K562 (cell line): ENCODE measurements at regions of chr2 and their contacts with region 1.

Region 1: DNA sequence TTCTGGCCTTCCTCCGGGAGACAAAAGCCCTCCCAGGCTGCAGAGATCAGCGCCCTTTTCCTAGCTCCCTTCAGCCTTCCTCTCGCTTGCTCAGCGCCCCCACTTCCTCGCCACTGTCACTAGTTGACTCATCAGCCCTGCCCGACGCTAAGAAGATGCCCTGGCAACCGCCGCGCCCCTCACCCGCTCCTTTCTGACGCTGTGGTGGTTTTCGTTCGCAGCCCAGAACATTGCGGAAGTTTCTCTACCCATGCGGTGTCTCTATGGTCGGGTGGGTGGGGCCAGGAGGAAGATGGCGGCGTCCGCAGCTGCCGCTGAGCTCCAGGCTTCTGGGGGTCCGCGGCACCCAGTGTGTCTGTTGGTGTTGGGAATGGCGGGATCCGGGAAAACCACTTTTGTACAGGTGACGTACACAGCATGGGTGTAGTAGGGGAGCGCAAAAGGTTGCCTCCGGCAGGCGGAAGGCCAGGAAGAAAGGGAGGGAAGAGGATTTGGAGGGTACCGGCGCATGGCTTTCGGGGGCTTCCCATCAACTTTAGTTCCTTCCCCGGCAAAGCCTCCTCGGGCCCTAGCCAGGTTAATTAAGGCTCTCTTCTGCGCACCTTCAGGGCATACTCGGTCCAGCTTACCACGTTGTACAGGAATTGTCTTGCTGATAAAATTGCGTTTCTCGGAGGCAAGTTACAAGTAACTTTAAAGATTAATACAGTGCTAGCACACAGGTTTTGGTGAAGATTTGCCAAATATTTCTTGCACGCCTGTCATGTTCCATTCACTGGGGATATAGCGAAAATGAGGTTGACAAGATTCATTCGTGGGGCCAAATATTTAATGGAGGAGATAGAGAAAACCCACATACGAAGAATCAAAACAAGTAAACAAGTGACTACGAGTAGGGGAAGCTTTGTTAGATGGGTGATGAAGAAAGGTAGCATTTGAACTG is at the starts of genes CCDC121 and GPN1:
- DNase-seq: peak; percentile 84 to 87 (median 86)
- ATAC-seq: peak; percentile 98
- H3K4me3 ChIP-seq: peak within 1 kb of the TSS; percentile 93
- H3K27ac ChIP-seq: peak within 1 kb of the TSS; percentile 82
- H3K4me1 ChIP-seq: peaks cover 0 to 11% of the 10 kb centered on the region in 2 experiments; a peak in 4 of 5 replicates
- H3K27me3 ChIP-seq: no peaks in the 10 kb centered on the region
- CTCF ChIP-seq: no peak
- EP300 ChIP-seq: no peak
- POLR2A ChIP-seq: peak; percentile 96
- RAD21 ChIP-seq: peak in 1 of 2 experiments; percentile 9; a peak in 1 of 4 replicates
- polyA plus RNA-seq, gene CCDC121: 2.2 to 4.2 TPM
- polyA plus RNA-seq, gene GPN1: 131 to 171 TPM

Region 2: GRCh38 chr2:27409321-27410073 is 219.5 kb before region 1 on chr2 and contains the start of gene PPM1G:
- CTCF ChIA-PET with region 1: no interaction called
- POLR2A ChIA-PET with region 1: interaction called, 3 read pairs
- in situ Hi-C with region 1: no loop called
- intact Hi-C with region 1: loop called (anchors 1 kb)
- DNase-seq: peak; percentile 93 to 97 (median 94)
- ATAC-seq: peak; percentile 98
- H3K4me3 ChIP-seq: peak within 1 kb of the TSS; percentile 99
- H3K27ac ChIP-seq: peak within 1 kb of the TSS; percentile 93
- H3K4me1 ChIP-seq: peaks cover 6 to 26% of the 10 kb centered on the region in 2 experiments; a peak in 4 of 5 replicates
- H3K27me3 ChIP-seq: no peaks in the 10 kb centered on the region
- CTCF ChIP-seq: 0 out of 6 replicates have a peak, but pooled peaks of 1 of the 3 experiments have one; percentile 7
- EP300 ChIP-seq: peak; percentile 40
- POLR2A ChIP-seq: peak; percentile 95
- RAD21 ChIP-seq: no peak
- polyA plus RNA-seq, gene PPM1G: 61.7 to 88.8 TPM

Region 3: GRCh38 chr2:27453967-27454366 is 175.1 kb before region 1 on chr2:
- CTCF ChIA-PET with region 1: no interaction called
- POLR2A ChIA-PET with region 1: no interaction called
- in situ Hi-C with region 1: no loop called
- intact Hi-C with region 1: no loop called
- DNase-seq: no peak
- ATAC-seq: peak; percentile 78
- H3K4me3 ChIP-seq: no peak overlapping the region
- H3K27ac ChIP-seq: no peak overlapping the region
- H3K4me1 ChIP-seq: no peaks in the 10 kb centered on the region
- H3K27me3 ChIP-seq: no peaks in the 10 kb centered on the region
- CTCF ChIP-seq: peak in 2 of 3 experiments; percentile 17 to 37; a peak in 3 of 6 replicates
- EP300 ChIP-seq: no peak
- POLR2A ChIP-seq: no peak
- RAD21 ChIP-seq: peak in 1 of 2 experiments; percentile 18; a peak in 1 of 4 replicates

Region 4: GRCh38 chr2:27489498-27490397 is 139.3 kb before region 1 on chr2 and contains the start of gene IFT172:
- CTCF ChIA-PET with region 1: no interaction called
- POLR2A ChIA-PET with region 1: no interaction called
- in situ Hi-C with region 1: no loop called
- intact Hi-C with region 1: loop called (anchors 10 kb)
- DNase-seq: peak; percentile 99 to 100 (median 99)
- ATAC-seq: peak; percentile 98
- H3K4me3 ChIP-seq: peak within 1 kb of the TSS; percentile 52
- H3K27ac ChIP-seq: peak within 1 kb of the TSS; percentile 73
- H3K4me1 ChIP-seq: peaks cover 6 to 10% of the 10 kb centered on the region in 2 experiments; a peak in 4 of 5 replicates
- H3K27me3 ChIP-seq: no peaks in the 10 kb centered on the region
- CTCF ChIP-seq: peak in 1 of 3 experiments; percentile 9; a peak in 1 of 6 replicates
- EP300 ChIP-seq: 0 out of 2 replicates have a peak, but pooled peaks have one; percentile 20
- POLR2A ChIP-seq: peak; percentile 86
- RAD21 ChIP-seq: peak in 1 of 2 experiments; percentile 30; a peak in 2 of 4 replicates
- polyA plus RNA-seq, gene IFT172: 5.6 to 7.3 TPM

Region 5: GRCh38 chr2:27606611-27607010 is 22.4 kb before region 1 on chr2:
- CTCF ChIA-PET with region 1: no interaction called
- POLR2A ChIA-PET with region 1: no interaction called
- in situ Hi-C with region 1: no loop called
- intact Hi-C with region 1: no loop called
- DNase-seq: no peak
- ATAC-seq: no peak
- H3K4me3 ChIP-seq: no peak overlapping the region
- H3K27ac ChIP-seq: no peak overlapping the region
- H3K4me1 ChIP-seq: no peaks in the 10 kb centered on the region
- H3K27me3 ChIP-seq: no peaks in the 10 kb centered on the region
- CTCF ChIP-seq: no peak
- EP300 ChIP-seq: no peak
- POLR2A ChIP-seq: no peak
- RAD21 ChIP-seq: no peak

Region 6: DNA sequence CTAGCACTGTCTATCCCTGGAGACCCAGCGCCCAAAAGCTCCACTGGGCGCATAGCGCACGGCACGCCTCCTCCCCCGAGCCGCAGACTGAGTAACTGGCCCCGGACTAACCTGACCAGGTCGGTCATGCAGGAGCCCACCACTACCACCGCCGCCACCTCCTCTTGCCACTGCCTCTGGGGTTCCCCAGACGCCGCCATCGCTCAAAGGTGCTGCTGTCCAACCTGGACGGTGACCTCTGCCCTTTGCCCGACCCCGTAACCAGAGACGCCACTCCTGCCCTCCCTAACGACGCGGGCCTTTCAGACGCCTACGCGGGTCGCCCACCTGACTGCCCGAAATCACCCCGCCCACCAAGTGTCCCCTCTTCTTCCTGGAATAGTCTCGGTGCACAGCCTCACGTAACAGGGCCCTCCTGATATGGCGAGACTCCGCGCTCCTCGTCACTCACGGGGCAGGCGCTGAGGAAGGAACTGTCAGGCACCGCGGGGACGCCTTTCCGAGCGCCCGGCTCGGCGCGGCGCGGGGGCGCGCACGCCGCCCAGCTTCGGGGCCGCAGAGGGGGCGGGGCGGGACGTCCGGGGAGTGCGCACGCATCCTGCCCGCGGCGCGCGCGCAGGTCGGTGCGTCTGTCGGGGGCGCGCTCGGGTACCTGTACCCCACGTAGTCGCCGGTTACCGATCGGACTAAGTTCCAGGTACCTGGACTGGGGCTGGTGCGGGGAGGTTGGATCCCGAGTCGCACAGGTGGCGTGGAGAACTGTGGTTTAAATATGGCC is 261.3 kb after region 1 on chr2 and contains the starts of genes BABAM2 and RBKS:
- CTCF ChIA-PET with region 1: no interaction called
- POLR2A ChIA-PET with region 1: no interaction called
- in situ Hi-C with region 1: no loop called
- intact Hi-C with region 1: no loop called
- DNase-seq: peak; percentile 91 to 97 (median 96)
- ATAC-seq: peak; percentile 93
- H3K4me3 ChIP-seq: peak within 1 kb of the TSS; percentile 57
- H3K27ac ChIP-seq: peak within 1 kb of the TSS; percentile 93
- H3K4me1 ChIP-seq: peaks cover 6 to 10% of the 10 kb centered on the region in 2 experiments; a peak in 4 of 5 replicates
- H3K27me3 ChIP-seq: no peaks in the 10 kb centered on the region
- CTCF ChIP-seq: no peak
- EP300 ChIP-seq: no peak
- POLR2A ChIP-seq: peak; percentile 80
- RAD21 ChIP-seq: peak in 1 of 2 experiments; percentile 6; a peak in 1 of 4 replicates
- polyA plus RNA-seq, gene BABAM2: 35.2 to 37.4 TPM
- polyA plus RNA-seq, gene RBKS: 0.06 to 0.24 TPM